Activated CD4-positive, alpha-beta memory T cell treated with anti-CD3 and anti-CD28 coated beads for 36 hours (primary cell): ENCODE measurements at regions of chr3 and their contacts with region 1.

Region 1: GRCh38 chr3:27927882-27928281 is 205.8 kb upstream of the EOMES start:
- DNase-seq: no peak
- H3K4me3 Mint-ChIP-seq: no peak overlapping the region
- H3K27ac Mint-ChIP-seq: peak overlapping the region; percentile 51
- H3K4me1 Mint-ChIP-seq: peaks cover 30% of the 10 kb centered on the region
- H3K27me3 Mint-ChIP-seq: peaks cover 1% of the 10 kb centered on the region

Region 2: DNA sequence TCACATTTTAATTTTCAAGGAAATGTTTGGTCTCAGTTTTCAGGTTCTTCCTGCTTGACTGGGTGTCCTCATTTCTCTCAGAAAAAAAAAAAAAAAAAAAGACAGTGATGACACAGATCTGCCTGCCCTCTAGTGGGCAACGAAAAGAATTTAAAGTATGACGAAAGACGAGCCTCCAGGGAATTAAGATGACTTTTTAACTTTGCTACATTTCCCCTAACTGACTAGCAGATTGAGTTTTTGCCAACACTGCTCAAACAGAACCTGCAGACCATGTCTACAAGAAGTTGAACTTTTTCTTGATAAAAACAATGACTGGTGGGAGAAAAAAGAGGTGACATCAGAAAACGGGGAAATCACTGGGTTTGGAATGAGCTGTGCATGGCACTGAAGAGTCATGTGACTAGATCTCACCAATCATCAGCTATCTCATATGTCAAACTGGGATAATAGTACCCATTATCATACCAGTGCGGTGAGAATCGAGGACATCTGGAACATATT is 246.6 kb before region 1 on chr3:
- CTCF ChIA-PET with region 1: no interaction called
- POLR2A ChIA-PET with region 1: no interaction called
- intact Hi-C with region 1: no loop called
- DNase-seq: no peak
- H3K4me3 Mint-ChIP-seq: peak overlapping the region; percentile 68
- H3K27ac Mint-ChIP-seq: peak overlapping the region; percentile 72
- H3K4me1 Mint-ChIP-seq: peaks cover 19% of the 10 kb centered on the region
- H3K27me3 Mint-ChIP-seq: no peaks in the 10 kb centered on the region

Region 3: GRCh38 chr3:27905625-27906024 is 22.3 kb before region 1 on chr3:
- CTCF ChIA-PET with region 1: no interaction called
- POLR2A ChIA-PET with region 1: no interaction called
- intact Hi-C with region 1: loop called (anchors 1 kb)
- DNase-seq: peak; percentile 39
- H3K4me3 Mint-ChIP-seq: no peak overlapping the region
- H3K27ac Mint-ChIP-seq: no peak overlapping the region
- H3K4me1 Mint-ChIP-seq: peaks cover 23% of the 10 kb centered on the region
- H3K27me3 Mint-ChIP-seq: no peaks in the 10 kb centered on the region

Region 4: DNA sequence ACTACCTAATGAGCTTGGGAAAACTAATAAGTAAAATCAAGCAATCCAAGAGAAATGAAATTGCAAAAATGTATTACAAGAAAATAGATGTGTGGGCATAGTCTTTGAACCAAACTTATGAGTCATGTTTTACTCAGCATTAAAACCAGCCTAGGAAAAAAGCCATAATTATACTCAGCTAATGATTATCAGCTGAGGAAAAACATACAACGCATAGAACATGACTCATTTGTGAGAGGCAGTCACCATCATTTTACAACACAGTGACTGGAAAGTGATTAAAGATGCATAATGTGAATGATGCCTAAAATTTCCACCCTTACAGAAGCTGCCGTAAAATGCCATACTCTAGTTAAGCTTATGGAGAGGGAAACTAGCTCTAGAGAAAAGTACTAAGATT is 32.3 kb after region 1 on chr3:
- CTCF ChIA-PET with region 1: no interaction called
- POLR2A ChIA-PET with region 1: interaction called, 5 read pairs
- intact Hi-C with region 1: loop called (anchors 1 kb)
- DNase-seq: no peak
- H3K4me3 Mint-ChIP-seq: no peak overlapping the region
- H3K27ac Mint-ChIP-seq: no peak overlapping the region
- H3K4me1 Mint-ChIP-seq: peaks cover 31% of the 10 kb centered on the region
- H3K27me3 Mint-ChIP-seq: no peaks in the 10 kb centered on the region